A549 (cell line): ENCODE measurements at regions of chr1 and their contacts with region 1.

Region 1: GRCh38 chr1:178055779-178056471 is 38.0 kb upstream of the RASAL2 start:
- DNase-seq: peak; percentile 66 to 81
- ATAC-seq: peak; percentile 88 to 93
- H3K4me3 ChIP-seq: no peak overlapping the region
- H3K27ac ChIP-seq: peak overlapping the region; percentile 58 to 84
- H3K4me1 ChIP-seq: peaks cover 53% of the 10 kb centered on the region
- CTCF ChIP-seq: peak; percentile 47
- EP300 ChIP-seq: no peak
- POLR2A ChIP-seq: no peak
- RAD21 ChIP-seq: peak; percentile 32 to 43

Region 2: GRCh38 chr1:178093205-178093957 is 37.5 kb after region 1 on chr1:
- CTCF ChIA-PET with region 1: interaction called, 12 read pairs
- POLR2A ChIA-PET with region 1: no interaction called
- DNase-seq: peak; percentile 96 to 98
- ATAC-seq: peak; percentile 78 to 88
- H3K4me3 ChIP-seq: peak overlapping the region; percentile 90
- H3K27ac ChIP-seq: peak overlapping the region; percentile 85 to 97
- H3K4me1 ChIP-seq: peaks cover 46% of the 10 kb centered on the region
- CTCF ChIP-seq: peak; percentile 14; the same call in 1 of the 3 replicates
- EP300 ChIP-seq: no peak
- POLR2A ChIP-seq: peak; percentile 37
- RAD21 ChIP-seq: no peak; a peak in 1 of 5 replicates